Psoas muscle (tissue), 8 donors: ENCODE measurements at regions of chr20 and their contacts with region 1.

Region 1: GRCh38 chr20:20664795-20665589 is 47.5 kb downstream of the RALGAPA2 start:
- DNase-seq: no peak
- ATAC-seq: peak; percentile 82 to 91 (median 84)
- H3K4me3 ChIP-seq: no peak overlapping the region
- H3K27ac ChIP-seq: peak overlapping the region; percentile 60
- H3K4me1 ChIP-seq: peaks cover 51% of the 10 kb centered on the region
- H3K27me3 ChIP-seq: no peaks in the 10 kb centered on the region
- CTCF ChIP-seq: peak; percentile 69

Region 2: DNA sequence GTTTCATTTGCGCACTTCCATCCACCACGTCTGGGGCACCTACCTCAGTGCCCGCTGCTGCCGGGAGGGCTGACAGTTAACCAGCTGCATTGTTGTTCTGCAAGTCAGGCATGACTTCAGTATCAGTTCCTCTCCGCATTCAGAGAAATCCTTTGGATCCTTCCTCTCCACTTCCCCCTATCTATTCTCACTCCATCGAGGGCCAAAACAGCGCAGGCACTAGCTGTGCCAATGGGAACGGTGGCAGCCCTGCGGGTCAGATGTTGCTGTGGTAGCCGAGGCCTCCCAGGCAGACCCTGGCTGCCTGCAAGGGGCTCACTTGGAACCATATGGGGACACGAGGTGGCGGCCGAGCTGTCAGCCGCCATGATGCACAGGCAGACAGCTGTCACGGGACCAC is 361.2 kb before region 1 on chr20:
- intact Hi-C with region 1: no loop called
- DNase-seq: peak; percentile 34 to 60
- ATAC-seq: peak in 1 of 4 donors; percentile 51
- H3K4me3 ChIP-seq: no peak overlapping the region
- H3K27ac ChIP-seq: no peak overlapping the region
- H3K4me1 ChIP-seq: no peaks in the 10 kb centered on the region
- H3K27me3 ChIP-seq: peaks cover 0 to 2% (median 0%) of the 10 kb centered on the region in 3 donors
- CTCF ChIP-seq: no peak

Region 3: DNA sequence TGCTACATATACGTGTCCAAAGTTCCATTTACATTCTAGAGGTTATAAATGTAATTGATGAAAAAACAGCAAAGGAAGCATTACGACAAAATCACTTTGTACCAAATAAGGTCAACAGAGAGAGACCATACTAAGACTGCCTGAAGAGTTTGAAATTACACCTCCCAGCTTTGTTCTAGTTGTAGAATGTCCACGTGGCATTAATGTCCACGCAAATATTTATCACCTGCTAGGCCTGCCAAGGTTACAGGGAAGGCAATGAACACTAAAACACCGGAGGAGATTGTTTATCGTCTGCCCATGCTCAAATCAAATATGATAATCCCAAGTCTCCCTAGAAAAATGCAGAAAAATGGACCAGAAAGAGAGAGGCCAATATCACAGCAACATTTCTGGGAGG is 41.3 kb after region 1 on chr20:
- intact Hi-C with region 1: loop called in 1 of 2 experiments (anchors 5 kb)
- DNase-seq: no peak
- ATAC-seq: peak; percentile 53 to 77 (median 64)
- H3K4me3 ChIP-seq: peak overlapping the region; percentile 13
- H3K27ac ChIP-seq: peak overlapping the region; percentile 59
- H3K4me1 ChIP-seq: peaks cover 78% of the 10 kb centered on the region
- H3K27me3 ChIP-seq: no peaks in the 10 kb centered on the region
- CTCF ChIP-seq: no peak

Region 4: DNA sequence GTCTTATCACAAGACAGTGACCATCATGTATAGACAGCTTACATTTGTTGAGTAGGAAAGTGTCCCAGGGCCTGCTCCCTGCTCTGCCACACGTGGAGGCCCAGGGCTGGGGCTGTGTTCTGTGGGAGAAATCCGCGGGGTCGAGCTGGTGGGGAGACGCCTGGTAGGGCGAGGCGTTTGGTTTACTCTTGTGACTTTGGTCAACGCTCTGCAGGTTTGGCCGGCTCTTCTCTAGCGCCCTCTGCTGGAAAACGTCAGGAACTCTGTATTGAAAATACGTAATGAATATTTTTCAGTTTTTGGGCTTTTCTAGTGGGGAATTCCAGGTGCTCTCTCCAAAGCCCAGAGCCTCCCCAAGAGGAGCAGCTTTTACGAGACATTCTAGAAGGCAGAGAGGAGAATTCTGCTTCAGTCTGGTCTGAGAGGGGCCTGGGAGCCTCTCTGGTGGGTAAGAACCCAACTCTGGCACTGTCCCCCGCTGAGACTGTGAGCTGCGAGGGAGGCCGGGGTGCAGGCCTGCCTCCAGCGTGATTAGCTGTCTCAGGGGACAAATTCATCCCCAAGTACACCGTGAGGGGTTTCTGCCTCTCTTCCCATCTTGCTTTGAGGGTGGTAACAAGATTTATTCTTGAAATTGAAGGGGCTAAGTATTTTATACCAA is 160.1 kb after region 1 on chr20:
- intact Hi-C with region 1: loop called (anchors 1 to 2 kb)
- DNase-seq: peak; percentile 38 to 79
- ATAC-seq: peak; percentile 66 to 87 (median 72)
- H3K4me3 ChIP-seq: peak overlapping the region; percentile 45
- H3K27ac ChIP-seq: no peak overlapping the region
- H3K4me1 ChIP-seq: peaks cover 24% of the 10 kb centered on the region
- H3K27me3 ChIP-seq: no peaks in the 10 kb centered on the region
- CTCF ChIP-seq: peak; percentile 91